Psoas muscle (tissue), 8 donors: ENCODE measurements at regions of chr17 and their contacts with region 1.

Region 1: GRCh38 chr17:56325313-56326000 is 172.2 kb downstream of the ANKFN1 start:
- DNase-seq: no peak
- ATAC-seq: no peak
- H3K4me3 ChIP-seq: no peak overlapping the region
- H3K27ac ChIP-seq: no peak overlapping the region
- H3K4me1 ChIP-seq: no peaks in the 10 kb centered on the region
- H3K27me3 ChIP-seq: peaks cover 0 to 4% (median 0%) of the 10 kb centered on the region in 3 donors
- CTCF ChIP-seq: no peak

Region 2: GRCh38 chr17:55421179-55421934 is 904.1 kb before region 1 on chr17 and contains the start of gene MMD:
- intact Hi-C with region 1: loop called in 1 of 2 experiments (anchors 10 kb)
- DNase-seq: peak; percentile 26 to 60
- ATAC-seq: peak; percentile 10 to 42 (median 28)
- H3K4me3 ChIP-seq: peak within 1 kb of the TSS; percentile 85
- H3K27ac ChIP-seq: peak within 1 kb of the TSS; percentile 78
- H3K4me1 ChIP-seq: peaks cover 19% of the 10 kb centered on the region
- H3K27me3 ChIP-seq: peaks cover 0 to 4% (median 0%) of the 10 kb centered on the region in 3 donors
- CTCF ChIP-seq: no peak
- total RNA-seq, gene MMD: 3.0 to 9.2 (median 4.2) TPM